Posterior vena cava (tissue), 2 donors: ENCODE measurements at regions of chr15 and their contacts with region 1.

Region 1: GRCh38 chr15:80849308-80849707 is 70.1 kb downstream of the CEMIP start:
- DNase-seq: no peak

Region 2: DNA sequence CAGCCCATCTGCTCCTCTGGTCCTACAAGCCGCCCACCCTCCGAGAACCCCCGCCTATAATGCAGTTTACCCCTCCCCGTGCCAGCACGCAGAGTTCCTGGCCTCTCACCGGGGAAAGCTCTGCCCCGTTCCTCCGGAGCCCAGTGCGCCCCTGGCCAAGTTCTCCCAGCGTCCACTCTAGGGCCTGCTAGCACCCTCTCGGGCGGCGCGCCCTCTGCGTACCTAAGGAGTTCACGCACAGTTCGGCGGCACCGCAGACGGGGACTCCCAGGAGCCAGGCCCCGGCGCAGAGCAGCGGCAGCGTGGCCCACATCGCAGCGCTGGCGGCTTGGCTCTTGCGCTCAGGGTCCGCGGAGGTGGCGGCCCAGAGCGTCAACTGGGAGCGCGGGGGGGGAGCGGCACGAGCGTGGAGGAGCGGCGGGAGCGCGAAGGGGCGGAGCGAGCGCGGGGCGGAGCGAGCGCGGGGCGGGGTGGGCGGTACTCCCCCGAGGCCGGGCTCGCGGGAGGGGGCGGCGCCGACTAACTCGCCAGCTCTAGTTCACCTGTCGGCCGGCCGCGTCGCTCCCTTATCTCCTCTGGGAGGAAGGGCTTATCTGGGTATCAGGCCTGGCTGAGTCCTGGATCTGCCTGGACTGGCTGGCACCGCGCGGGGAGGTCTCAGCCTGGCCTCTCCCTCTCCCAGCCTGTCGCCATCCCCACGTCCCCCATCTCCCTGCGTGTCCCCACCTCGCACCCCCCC is 1904.5 kb before region 1 on chr15 and contains the start of gene CTSH:
- intact Hi-C with region 1: loop called in 1 of 2 experiments (anchors 5 kb)
- DNase-seq: peak; percentile 92
- total RNA-seq, gene CTSH: 40.0 to 129 TPM

Region 3: DNA sequence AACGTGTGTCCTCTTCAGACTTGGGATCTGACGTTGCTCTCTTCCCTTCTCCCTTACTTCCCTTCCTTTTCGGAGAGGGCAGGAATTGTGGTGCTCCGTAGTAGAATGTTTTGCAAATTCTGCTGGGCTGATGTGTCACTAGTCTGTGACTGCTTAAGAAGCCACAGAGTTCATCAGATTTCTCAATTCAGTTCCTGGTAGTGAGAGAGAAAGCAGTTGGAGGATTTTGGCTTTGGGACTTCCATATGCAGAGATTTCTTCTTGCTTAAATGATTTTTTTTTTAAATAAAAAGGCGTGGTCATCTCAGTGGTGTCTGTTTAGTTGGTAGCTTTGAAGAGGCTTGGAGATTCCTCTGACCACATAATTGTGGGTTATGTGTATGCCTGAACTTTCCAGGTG is 60.0 kb before region 1 on chr15:
- intact Hi-C with region 1: no loop called
- DNase-seq: no peak

Region 4: GRCh38 chr15:80932989-80933388 is 83.7 kb after region 1 on chr15:
- intact Hi-C with region 1: no loop called
- DNase-seq: peak; percentile 91

Region 5: DNA sequence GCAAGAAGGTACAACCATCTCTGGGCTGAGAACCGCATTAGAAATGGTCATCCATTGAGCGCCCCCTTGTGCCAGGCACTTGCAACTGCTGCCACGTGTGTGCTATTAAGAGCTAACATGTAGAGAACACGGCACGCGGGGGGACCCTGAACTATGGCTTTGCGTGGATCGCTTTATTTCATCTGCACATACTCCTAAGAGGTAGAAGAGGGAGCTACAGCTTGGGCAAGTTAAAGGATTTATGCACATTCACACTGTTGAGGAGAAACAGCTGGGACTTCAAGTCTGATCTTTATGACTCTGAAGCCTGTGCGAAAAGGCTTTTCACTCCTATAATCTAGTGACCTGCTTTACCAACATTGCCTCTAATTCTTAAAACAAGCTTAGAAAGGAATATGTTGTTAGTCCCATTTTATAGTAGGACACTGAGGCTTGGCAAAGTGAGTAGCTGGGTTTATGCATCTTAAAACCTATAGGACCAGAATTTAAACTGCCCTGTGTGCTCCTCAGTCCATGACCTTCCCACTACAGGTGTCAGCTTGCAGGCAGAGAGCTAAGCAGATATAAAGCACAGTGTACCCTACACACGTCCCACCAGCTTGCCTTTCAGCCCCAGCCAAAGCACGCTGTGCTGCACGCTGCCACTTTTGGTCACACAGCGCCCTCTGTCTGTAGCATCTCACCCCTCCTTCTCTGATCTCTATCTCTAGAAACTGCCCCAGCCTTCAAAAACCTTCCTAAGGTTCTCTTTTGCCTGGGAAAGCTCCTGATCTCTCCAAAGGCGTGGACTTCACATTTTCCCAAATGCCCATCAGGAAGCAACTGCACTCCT is 416.9 kb after region 1 on chr15:
- intact Hi-C with region 1: no loop called
- DNase-seq: peak; percentile 93